Activated naive CD4-positive, alpha-beta T cell treated with anti-CD3 and anti-CD28 coated beads for 36 hours (primary cell): ENCODE measurements at regions of chr14 and their contacts with region 1.

Region 1: GRCh38 chr14:106556665-106557289 is 1030.4 kb downstream of the TMEM121 start:
- DNase-seq: peak; percentile 88
- H3K4me3 Mint-ChIP-seq: no peak overlapping the region
- H3K27ac Mint-ChIP-seq: no peak overlapping the region
- H3K4me1 Mint-ChIP-seq: no peaks in the 10 kb centered on the region
- H3K27me3 Mint-ChIP-seq: peaks cover 5% of the 10 kb centered on the region

Region 2: DNA sequence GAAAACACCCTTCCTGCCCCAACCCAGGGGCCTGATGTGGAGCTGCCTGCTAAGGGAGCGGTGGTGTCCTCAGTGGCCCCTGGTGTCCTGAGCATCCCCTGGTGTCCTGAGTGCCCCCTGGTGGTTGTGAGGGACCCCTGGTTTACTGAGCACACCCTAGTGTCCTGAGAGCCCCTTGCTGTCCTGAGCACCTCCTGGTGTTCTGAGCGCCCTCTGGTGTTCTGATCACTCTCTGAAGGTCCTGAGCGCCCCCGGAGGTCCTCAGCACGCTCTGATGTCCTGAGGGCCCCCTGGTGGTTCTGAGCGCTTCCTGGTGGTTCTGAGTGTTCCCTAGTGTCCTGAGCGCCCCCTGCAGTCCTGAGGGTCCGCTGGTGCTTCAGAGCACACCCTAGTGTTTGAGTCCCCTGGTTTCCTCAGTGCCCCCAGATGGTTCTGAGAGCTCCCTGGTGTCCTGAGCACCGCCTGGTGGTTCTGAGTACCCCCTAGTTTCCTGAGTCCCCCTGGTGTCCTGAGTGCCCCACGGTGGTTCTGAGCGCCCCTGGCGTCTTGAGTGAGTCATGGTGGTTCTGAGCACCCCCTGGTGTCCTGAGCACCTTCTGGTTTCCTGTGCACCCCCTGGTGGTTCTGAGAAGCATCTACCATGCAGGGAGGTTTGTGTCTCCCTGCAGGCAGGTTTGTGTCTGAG is 26.2 kb before region 1 on chr14:
- CTCF ChIA-PET with region 1: interaction called, 15 read pairs
- intact Hi-C with region 1: no loop called
- DNase-seq: peak; percentile 53
- H3K4me3 Mint-ChIP-seq: no peak overlapping the region
- H3K27ac Mint-ChIP-seq: no peak overlapping the region
- H3K4me1 Mint-ChIP-seq: peaks cover 3% of the 10 kb centered on the region
- H3K27me3 Mint-ChIP-seq: peaks cover 16% of the 10 kb centered on the region

Region 3: GRCh38 chr14:106538201-106538600 is 18.6 kb before region 1 on chr14:
- CTCF ChIA-PET with region 1: interaction called, 23 read pairs
- intact Hi-C with region 1: no loop called
- DNase-seq: no peak
- H3K4me3 Mint-ChIP-seq: no peak overlapping the region
- H3K27ac Mint-ChIP-seq: no peak overlapping the region
- H3K4me1 Mint-ChIP-seq: peaks cover 6% of the 10 kb centered on the region
- H3K27me3 Mint-ChIP-seq: peaks cover 21% of the 10 kb centered on the region